RWPE1 (cell line): ENCODE measurements at regions of chr6 and their contacts with region 1.

Region 1: DNA sequence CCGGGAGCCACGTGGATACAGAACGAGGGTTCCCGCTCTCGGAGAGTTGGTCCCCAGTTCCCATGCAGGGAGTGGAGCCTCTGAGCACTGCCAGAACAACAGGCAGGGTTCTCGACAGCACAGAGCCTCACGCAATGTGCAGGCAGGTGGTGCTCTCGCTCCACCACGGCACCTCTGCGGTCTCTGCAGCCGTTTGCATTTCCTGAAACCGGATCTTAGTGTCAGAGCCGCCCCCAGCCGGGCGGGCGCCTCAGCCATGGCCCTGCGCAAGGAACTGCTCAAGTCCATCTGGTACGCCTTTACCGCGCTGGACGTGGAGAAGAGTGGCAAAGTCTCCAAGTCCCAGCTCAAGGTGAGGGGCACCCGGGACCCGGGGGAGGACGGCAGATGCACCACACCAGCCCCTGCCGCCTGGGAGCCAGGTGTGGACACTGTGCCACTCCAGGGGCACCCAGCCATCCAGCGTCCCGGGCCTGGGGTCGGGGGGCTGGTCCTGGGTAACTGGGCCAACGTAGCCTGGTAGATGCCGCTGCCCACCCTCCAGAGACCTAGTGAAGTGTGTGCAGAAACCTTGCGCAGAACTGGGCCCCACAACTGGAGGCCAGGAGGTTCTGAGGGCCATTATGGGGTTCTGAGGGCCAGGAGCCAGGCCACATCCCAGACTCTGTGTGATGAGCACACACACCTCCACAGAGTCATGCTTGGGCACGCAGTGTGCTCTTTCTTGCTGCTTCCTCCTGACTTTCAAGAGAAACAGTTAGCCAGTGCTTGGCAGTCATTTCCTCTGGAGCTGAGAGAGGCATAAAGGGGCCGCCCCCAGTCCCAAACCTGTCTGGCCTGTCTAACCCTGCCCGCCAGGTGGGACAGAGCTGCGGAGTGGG is at the start of gene DEF6:
- DNase-seq: peak; percentile 95
- H3K27ac ChIP-seq: peak within 1 kb of the TSS; percentile 93
- CTCF ChIP-seq: peak; percentile 93

Region 2: DNA sequence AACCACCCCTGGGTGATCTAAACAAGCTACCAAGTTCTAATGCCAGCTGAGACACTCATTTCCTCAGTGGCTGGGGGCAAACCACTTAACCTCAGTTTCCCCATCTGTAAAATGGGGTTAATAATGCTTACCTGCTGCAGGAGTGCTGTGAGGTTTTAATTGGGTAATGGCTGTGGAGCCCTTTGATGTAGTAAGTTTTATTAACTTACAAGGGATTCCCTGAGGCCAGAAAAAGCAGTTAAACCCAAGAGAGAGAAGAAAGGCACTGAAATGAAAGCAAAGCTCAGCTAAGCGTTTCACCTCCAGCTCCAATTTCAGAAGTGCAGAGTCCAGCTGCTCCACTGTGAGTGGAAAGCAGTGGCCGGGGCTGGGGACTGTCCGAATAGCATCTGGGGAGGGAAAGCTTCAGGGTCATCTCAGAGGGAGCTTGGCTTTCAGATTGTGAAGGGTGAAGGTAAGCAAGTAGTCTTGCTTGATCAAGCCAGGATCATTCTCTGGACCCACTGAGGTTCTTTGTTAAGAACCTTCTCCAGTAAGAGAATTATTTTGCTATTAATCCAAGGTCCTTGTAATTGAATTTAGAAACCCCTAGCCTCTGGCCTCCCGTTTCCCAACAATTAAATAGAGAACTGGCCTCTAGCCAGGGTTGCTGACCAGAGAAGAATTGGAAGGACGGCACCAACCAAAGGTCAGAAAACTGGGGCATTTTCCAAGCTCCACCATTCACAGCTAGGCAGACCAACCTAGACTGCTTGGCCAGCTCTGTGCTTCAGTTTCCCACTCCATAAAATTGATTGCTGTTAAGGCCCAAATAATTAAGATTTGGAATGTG is 135.8 kb before region 1 on chr6:
- CTCF ChIA-PET with region 1: no interaction called
- POLR2A ChIA-PET with region 1: no interaction called
- DNase-seq: no peak
- H3K27ac ChIP-seq: no peak overlapping the region
- CTCF ChIP-seq: no peak

Region 3: DNA sequence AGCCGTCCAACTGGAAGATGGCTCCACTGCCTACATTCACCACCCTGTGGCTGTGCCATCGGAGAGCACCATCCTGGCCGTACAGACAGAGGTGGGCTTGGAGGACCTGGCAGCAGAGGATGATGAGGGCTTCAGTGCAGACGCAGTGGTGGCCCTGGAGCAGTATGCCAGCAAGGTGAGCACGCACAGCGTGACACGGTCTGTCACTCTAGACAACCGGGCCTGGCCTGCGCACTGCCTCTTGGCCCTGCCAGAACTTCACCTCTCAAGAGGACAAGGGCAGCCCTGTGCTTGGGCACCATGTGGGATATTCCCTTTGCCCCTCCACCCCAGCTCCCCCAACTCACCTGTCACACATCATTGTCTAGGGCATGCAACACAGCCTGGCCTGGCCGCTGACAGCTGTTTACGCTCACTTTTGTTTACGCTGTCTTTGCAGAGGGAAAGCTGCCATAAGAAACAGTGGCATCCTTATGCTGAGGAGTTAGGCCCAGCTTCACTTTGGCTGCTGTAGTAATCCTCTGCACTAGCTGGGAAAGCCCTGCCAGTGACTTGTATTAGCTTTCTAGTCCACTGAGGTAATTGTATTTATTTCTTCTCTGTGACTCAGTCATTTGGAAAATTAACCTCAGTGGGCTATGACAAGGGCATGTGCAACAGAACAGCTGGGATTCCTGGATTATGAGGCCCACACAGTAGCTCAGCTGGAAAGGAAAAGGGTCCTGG is 10.0 kb before region 1 on chr6:
- CTCF ChIA-PET with region 1: no interaction called
- POLR2A ChIA-PET with region 1: no interaction called
- DNase-seq: no peak
- H3K27ac ChIP-seq: no peak overlapping the region
- CTCF ChIP-seq: no peak

Region 4: DNA sequence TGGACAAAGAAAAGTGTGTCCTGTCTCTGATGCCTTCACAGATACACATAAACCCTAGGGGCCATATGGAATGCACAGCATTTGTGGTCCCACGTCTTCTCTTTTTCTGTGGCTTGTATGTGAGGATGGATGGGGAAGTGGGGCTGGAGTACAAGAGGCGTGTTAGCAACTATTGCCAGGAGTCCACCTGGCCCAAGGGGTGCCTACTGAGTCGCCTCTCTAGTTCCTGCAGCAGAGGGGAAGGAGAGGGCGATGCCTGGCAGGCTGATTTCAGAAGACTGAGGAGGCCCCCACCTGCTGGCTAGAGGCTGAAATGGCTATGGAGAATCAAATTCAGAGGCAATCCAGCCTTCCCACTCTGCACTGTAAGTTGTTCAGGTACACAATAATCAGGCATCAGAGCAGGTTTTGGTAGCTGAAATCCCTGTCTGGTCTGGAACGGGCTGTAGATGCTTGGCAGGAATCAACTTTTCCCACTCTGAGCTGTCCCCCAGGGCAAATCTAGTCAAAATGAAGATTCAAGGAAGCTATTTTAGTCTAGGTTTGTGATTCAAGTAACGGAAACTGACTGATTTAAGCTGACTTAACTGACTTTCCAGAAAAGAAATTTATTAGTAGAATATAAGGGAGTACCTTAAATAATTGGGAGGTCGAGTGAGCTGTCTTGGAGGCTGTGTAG is 29.6 kb after region 1 on chr6:
- CTCF ChIA-PET with region 1: interaction called, 18 read pairs
- POLR2A ChIA-PET with region 1: interaction called, 4 read pairs
- DNase-seq: peak; percentile 69
- H3K27ac ChIP-seq: no peak overlapping the region
- CTCF ChIP-seq: peak; percentile 55

Region 5: GRCh38 chr6:35342258-35343091 is 44.6 kb after region 1 on chr6 and contains the start of gene PPARD:
- CTCF ChIA-PET with region 1: interaction called, 16 read pairs
- POLR2A ChIA-PET with region 1: no interaction called
- DNase-seq: peak; percentile 99
- H3K27ac ChIP-seq: peak within 1 kb of the TSS; percentile 78
- CTCF ChIP-seq: peak; percentile 97

Region 6: DNA sequence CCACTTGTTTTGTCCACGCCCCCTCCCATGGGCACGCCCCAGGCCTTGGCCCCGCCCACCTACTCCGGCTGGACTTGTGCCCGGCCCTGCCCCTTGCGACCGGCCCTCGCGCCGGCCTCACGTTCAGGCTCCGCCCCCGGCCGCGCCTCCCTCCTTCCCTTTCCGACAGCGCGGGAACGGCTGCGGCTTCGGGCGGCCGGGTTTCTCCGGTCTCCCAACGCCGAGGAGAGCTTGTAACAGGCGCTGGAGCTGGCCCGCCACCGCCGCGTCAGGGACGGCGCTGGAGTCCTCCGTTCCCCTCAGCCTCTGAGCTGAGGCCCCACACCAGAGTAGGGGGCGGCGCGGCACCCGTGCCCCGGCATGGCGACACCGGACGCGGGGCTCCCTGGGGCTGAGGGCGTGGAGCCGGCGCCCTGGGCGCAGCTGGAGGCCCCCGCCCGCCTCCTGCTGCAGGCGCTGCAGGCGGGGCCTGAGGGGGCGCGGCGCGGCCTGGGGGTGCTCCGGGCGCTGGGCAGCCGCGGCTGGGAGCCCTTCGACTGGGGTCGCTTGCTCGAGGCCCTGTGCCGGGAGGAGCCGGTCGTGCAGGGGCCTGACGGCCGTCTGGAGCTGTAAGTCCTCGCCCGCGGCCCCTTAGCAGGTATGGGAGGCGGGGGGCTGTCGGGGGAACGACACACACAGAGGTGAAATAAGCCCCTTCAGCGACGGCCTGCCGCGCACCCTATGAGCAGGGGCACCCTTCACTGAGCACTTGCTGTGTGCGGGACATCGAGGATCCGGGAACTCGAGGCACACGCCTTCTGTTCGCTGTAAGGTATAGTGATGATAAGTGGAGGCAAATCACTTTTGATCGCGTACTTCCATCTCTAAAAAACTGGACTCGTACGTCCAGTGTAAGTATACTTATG is 154.6 kb after region 1 on chr6 and contains the start of gene FANCE:
- CTCF ChIA-PET with region 1: interaction called, 18 read pairs
- POLR2A ChIA-PET with region 1: interaction called, 3 read pairs
- DNase-seq: peak; percentile 92
- H3K27ac ChIP-seq: peak within 1 kb of the TSS; percentile 86
- CTCF ChIP-seq: no peak